ENCODE measurements at regions of chr6 and their contacts with region 1.

Region 1: GRCh38 chr6:88963139-88964090 is at the start of gene RNGTT:
- DNase-seq: peak; percentile 94 to 99 (median 97)
- ATAC-seq: peak; percentile 98
- H3K4me3 ChIP-seq: peak within 1 kb of the TSS; percentile 88
- H3K4me3 Mint-ChIP-seq: peak within 1 kb of the TSS; percentile 96
- H3K27ac ChIP-seq: peak within 1 kb of the TSS; percentile 60 to 65
- H3K27ac Mint-ChIP-seq: peak within 1 kb of the TSS; percentile 82
- H3K4me1 ChIP-seq: peaks cover 15% of the 10 kb centered on the region
- H3K4me1 Mint-ChIP-seq: peaks cover 63% of the 10 kb centered on the region
- H3K27me3 ChIP-seq: no peaks in the 10 kb centered on the region
- H3K27me3 Mint-ChIP-seq: no peaks in the 10 kb centered on the region
- CTCF ChIP-seq: no peak
- total RNA-seq, gene RNGTT: 11.6 to 12.4 TPM

Region 2: GRCh38 chr6:89145787-89146646 is 182.6 kb after region 1 on chr6 and contains the start of gene PM20D2:
- CTCF ChIA-PET with region 1: no interaction called
- POLR2A ChIA-PET with region 1: interaction called, 13 read pairs
- intact Hi-C with region 1: no loop called
- DNase-seq: peak; percentile 33 to 78 (median 54)
- ATAC-seq: peak; percentile 73
- H3K4me3 ChIP-seq: peak within 1 kb of the TSS; percentile 74
- H3K4me3 Mint-ChIP-seq: peak within 1 kb of the TSS; percentile 99
- H3K27ac ChIP-seq: peak within 1 kb of the TSS; percentile 45 to 62
- H3K27ac Mint-ChIP-seq: peak within 1 kb of the TSS; percentile 93
- H3K4me1 ChIP-seq: peaks cover 12% of the 10 kb centered on the region
- H3K4me1 Mint-ChIP-seq: peaks cover 37% of the 10 kb centered on the region
- H3K27me3 ChIP-seq: no peaks in the 10 kb centered on the region
- H3K27me3 Mint-ChIP-seq: no peaks in the 10 kb centered on the region
- CTCF ChIP-seq: no peak
- total RNA-seq, gene PM20D2: 5.2 to 5.3 TPM

Region 3: DNA sequence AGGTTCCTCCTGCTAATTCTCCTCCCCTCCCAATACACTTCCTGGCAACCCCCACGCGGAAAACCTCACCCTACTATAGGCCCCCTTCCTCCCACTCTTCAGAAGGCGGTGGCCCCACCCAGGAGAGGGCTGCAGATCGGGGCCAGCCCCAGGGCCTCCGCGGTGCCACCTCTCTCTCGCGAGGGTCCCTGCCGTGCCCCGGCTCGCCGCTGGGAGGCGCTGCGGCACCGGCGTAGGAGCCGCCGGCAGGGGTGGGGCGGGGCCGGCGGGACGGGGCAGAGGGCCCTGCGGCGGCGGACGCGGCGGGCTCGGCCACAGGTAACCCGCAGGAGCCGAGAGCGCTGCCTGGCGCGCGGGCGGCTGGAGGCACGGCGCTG is 469.4 kb after region 1 on chr6 and contains the start of gene ANKRD6:
- CTCF ChIA-PET with region 1: no interaction called
- POLR2A ChIA-PET with region 1: no interaction called
- intact Hi-C with region 1: loop called in 1 of 2 experiments (anchors 10 kb)
- DNase-seq: peak; percentile 57 to 90 (median 78)
- ATAC-seq: peak; percentile 94
- H3K4me3 ChIP-seq: peak within 1 kb of the TSS; percentile 73
- H3K4me3 Mint-ChIP-seq: peak within 1 kb of the TSS; percentile 98
- H3K27ac ChIP-seq: peak within 1 kb of the TSS in 1 of 2 donors; percentile 37
- H3K27ac Mint-ChIP-seq: peak within 1 kb of the TSS; percentile 73
- H3K4me1 ChIP-seq: peaks cover 15% of the 10 kb centered on the region
- H3K4me1 Mint-ChIP-seq: peaks cover 35% of the 10 kb centered on the region
- H3K27me3 ChIP-seq: no peaks in the 10 kb centered on the region
- H3K27me3 Mint-ChIP-seq: no peaks in the 10 kb centered on the region
- CTCF ChIP-seq: peak; percentile 69
- total RNA-seq, gene ANKRD6: 3.8 to 4.8 TPM

Region 4: GRCh38 chr6:89638320-89639195 is 675.1 kb after region 1 on chr6 and contains the start of gene LYRM2:
- CTCF ChIA-PET with region 1: no interaction called
- POLR2A ChIA-PET with region 1: interaction called, 9 read pairs
- intact Hi-C with region 1: loop called in 1 of 2 experiments (anchors 5 kb)
- DNase-seq: peak; percentile 80 to 95 (median 86)
- ATAC-seq: peak; percentile 95
- H3K4me3 ChIP-seq: peak within 1 kb of the TSS; percentile 93
- H3K4me3 Mint-ChIP-seq: peak within 1 kb of the TSS; percentile 97
- H3K27ac ChIP-seq: peak within 1 kb of the TSS; percentile 92 to 99
- H3K27ac Mint-ChIP-seq: peak within 1 kb of the TSS; percentile 98
- H3K4me1 ChIP-seq: peaks cover 15% of the 10 kb centered on the region
- H3K4me1 Mint-ChIP-seq: peaks cover 35% of the 10 kb centered on the region
- H3K27me3 ChIP-seq: no peaks in the 10 kb centered on the region
- H3K27me3 Mint-ChIP-seq: no peaks in the 10 kb centered on the region
- CTCF ChIP-seq: no peak
- total RNA-seq, gene LYRM2: 12.3 to 16.3 TPM

Region 5: DNA sequence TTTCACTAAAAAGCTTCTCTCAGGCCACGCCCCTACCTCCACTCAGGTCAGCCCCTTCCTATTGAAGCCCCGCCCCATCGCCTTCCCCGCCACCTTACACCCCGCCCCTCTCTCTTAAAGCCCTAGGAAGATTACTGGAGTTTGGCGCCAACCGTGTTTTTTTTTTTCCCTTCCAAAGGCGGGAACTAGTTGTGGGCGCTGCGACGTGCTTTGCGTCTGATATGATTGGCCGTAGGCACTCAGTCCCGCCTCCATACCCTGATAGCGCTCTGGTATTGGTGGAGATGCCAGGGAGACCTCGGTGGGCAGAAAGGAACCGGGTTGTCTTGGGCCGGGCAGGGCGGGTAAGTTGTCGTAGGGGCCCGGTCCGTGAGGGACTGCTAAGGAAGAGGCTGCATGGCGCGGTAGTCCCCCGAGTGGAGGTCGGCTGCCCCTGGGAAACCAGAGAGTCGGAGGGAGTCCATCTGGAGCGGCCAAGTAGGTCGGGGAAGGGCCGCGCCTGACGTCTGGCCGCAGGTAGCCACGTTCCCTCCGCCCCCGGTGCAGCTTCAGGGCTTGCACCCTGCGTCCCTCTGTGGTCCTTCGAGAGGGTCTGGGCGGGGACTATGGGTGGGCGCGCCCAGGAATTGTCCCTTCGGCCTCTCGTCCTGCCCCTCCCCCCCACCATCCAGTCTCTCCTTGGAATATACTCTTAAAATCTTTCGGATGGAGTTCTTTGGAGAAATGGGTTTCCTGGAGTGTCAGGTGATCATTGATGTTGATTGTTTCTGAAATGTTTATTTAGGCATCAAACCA is 866.4 kb after region 1 on chr6 and contains the start of gene CASP8AP2:
- CTCF ChIA-PET with region 1: no interaction called
- POLR2A ChIA-PET with region 1: interaction called, 4 read pairs
- intact Hi-C with region 1: loop called in 1 of 2 experiments (anchors 5 kb)
- DNase-seq: peak; percentile 86 to 99 (median 92)
- ATAC-seq: peak; percentile 93
- H3K4me3 ChIP-seq: peak within 1 kb of the TSS; percentile 100
- H3K4me3 Mint-ChIP-seq: peak within 1 kb of the TSS; percentile 94
- H3K27ac ChIP-seq: peak within 1 kb of the TSS; percentile 68 to 86
- H3K27ac Mint-ChIP-seq: peak within 1 kb of the TSS; percentile 91
- H3K4me1 ChIP-seq: peaks cover 33% of the 10 kb centered on the region
- H3K4me1 Mint-ChIP-seq: peaks cover 35% of the 10 kb centered on the region
- H3K27me3 ChIP-seq: no peaks in the 10 kb centered on the region
- H3K27me3 Mint-ChIP-seq: no peaks in the 10 kb centered on the region
- CTCF ChIP-seq: no peak
- total RNA-seq, gene CASP8AP2: 17.3 to 20.0 TPM

Region 6: GRCh38 chr6:90586836-90587638 is 1623.6 kb after region 1 on chr6 and contains the start of gene MAP3K7:
- CTCF ChIA-PET with region 1: no interaction called
- POLR2A ChIA-PET with region 1: interaction called, 3 read pairs
- intact Hi-C with region 1: loop called (anchors 5 kb)
- DNase-seq: peak; percentile 80 to 97 (median 92)
- ATAC-seq: peak; percentile 85
- H3K4me3 ChIP-seq: peak within 1 kb of the TSS; percentile 94
- H3K4me3 Mint-ChIP-seq: peak within 1 kb of the TSS; percentile 98
- H3K27ac ChIP-seq: peak within 1 kb of the TSS; percentile 97 to 99
- H3K27ac Mint-ChIP-seq: peak within 1 kb of the TSS; percentile 96
- H3K4me1 ChIP-seq: peaks cover 15% of the 10 kb centered on the region
- H3K4me1 Mint-ChIP-seq: peaks cover 50% of the 10 kb centered on the region
- H3K27me3 ChIP-seq: peaks cover 0 to 9% of the 10 kb centered on the region in 2 experiments
- H3K27me3 Mint-ChIP-seq: peaks cover 9% of the 10 kb centered on the region
- CTCF ChIP-seq: no peak
- total RNA-seq, gene MAP3K7: 9.0 to 9.3 TPM

Measured in CD4-positive, alpha-beta T cell (primary cell).